CD4-positive, alpha-beta T cell (primary cell): ENCODE measurements at regions of chr13 and their contacts with region 1.

Region 1: GRCh38 chr13:23899555-23899954 is 2.3 kb upstream of the C1QTNF9B start:
- DNase-seq: peak in 10 of 14 experiments; percentile 4 to 62 (median 26)
- ATAC-seq: peak; percentile 77
- H3K4me3 ChIP-seq: no peak overlapping the region
- H3K4me3 Mint-ChIP-seq: no peak overlapping the region
- H3K27ac ChIP-seq: no peak overlapping the region
- H3K27ac Mint-ChIP-seq: no peak overlapping the region
- H3K4me1 ChIP-seq: peaks cover 12% of the 10 kb centered on the region
- H3K4me1 Mint-ChIP-seq: no peaks in the 10 kb centered on the region
- H3K27me3 ChIP-seq: peaks cover 24 to 38% of the 10 kb centered on the region in 2 experiments
- H3K27me3 Mint-ChIP-seq: peaks cover 50% of the 10 kb centered on the region
- CTCF ChIP-seq: peak; percentile 69

Region 2: GRCh38 chr13:23570099-23570920 is 329.2 kb before region 1 on chr13 and contains the start of gene TNFRSF19:
- CTCF ChIA-PET with region 1: no interaction called
- POLR2A ChIA-PET with region 1: no interaction called
- intact Hi-C with region 1: loop called in 1 of 2 experiments (anchors 5 kb)
- DNase-seq: no peak
- ATAC-seq: peak; percentile 39
- H3K4me3 ChIP-seq: no peak within 1 kb of the TSS
- H3K4me3 Mint-ChIP-seq: no peak within 1 kb of the TSS
- H3K27ac ChIP-seq: no peak within 1 kb of the TSS
- H3K27ac Mint-ChIP-seq: no peak within 1 kb of the TSS
- H3K4me1 ChIP-seq: no peaks in the 10 kb centered on the region
- H3K4me1 Mint-ChIP-seq: peaks cover 5% of the 10 kb centered on the region
- H3K27me3 ChIP-seq: peaks cover 15 to 56% of the 10 kb centered on the region in 2 experiments
- H3K27me3 Mint-ChIP-seq: peaks cover 87% of the 10 kb centered on the region
- CTCF ChIP-seq: no peak
- total RNA-seq, gene TNFRSF19: not detected

Region 3: GRCh38 chr13:24450530-24450929 is 551.0 kb after region 1 on chr13:
- CTCF ChIA-PET with region 1: no interaction called
- POLR2A ChIA-PET with region 1: no interaction called
- intact Hi-C with region 1: no loop called
- DNase-seq: no peak
- ATAC-seq: no peak
- H3K4me3 ChIP-seq: no peak overlapping the region
- H3K4me3 Mint-ChIP-seq: no peak overlapping the region
- H3K27ac ChIP-seq: no peak overlapping the region
- H3K27ac Mint-ChIP-seq: no peak overlapping the region
- H3K4me1 ChIP-seq: no peaks in the 10 kb centered on the region
- H3K4me1 Mint-ChIP-seq: no peaks in the 10 kb centered on the region
- H3K27me3 ChIP-seq: no peaks in the 10 kb centered on the region
- H3K27me3 Mint-ChIP-seq: no peaks in the 10 kb centered on the region
- CTCF ChIP-seq: no peak